Motor neuron (in vitro differentiated cells): ENCODE measurements at regions of chr2 and their contacts with region 1.

Region 1: GRCh38 chr2:159939946-159940345 is 122.5 kb downstream of the PLA2R1 start:
- ATAC-seq: peak in 3 of 8 experiments; percentile 23 to 60 (median 53)
- H3K4me3 ChIP-seq: no peak overlapping the region
- H3K27ac ChIP-seq: no peak overlapping the region
- H3K4me1 ChIP-seq: no peaks in the 10 kb centered on the region

Region 2: DNA sequence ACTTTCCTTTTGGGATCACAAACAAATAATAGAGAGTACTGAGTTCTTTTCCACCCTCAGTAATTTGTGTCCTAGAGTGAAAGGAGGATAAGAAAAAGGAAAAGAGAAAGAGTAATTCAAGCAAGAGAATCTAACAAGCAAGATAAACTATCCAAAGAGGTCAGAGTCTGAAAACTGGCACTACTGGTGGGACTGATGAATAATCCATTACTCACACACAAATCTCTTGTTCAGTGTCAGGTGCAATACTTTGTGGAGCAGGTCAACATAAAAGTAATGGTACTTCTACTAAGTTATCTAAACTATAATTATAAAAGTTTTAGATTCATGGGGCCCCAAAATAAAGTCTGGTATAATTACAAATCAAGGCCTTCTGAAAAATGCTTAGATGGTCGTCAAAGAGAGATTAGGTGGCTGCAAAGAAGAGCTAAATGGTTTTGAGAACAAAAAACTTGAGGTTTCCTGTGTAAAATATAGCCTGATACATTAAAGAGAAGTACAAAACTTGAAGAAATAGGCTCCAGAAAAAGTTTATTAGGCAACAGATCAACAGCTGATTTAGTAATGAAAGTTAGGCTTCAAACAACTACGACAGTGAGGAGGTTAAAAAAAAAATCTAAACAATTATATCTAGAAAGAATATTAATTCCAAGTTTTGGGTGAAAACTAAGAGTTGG is 433.0 kb before region 1 on chr2:
- in situ Hi-C with region 1: no loop called
- ATAC-seq: no peak
- H3K4me3 ChIP-seq: no peak overlapping the region
- H3K27ac ChIP-seq: no peak overlapping the region
- H3K4me1 ChIP-seq: peaks cover 0 to 2% of the 10 kb centered on the region in 2 donors

Region 3: GRCh38 chr2:159755788-159756187 is 184.2 kb before region 1 on chr2:
- in situ Hi-C with region 1: no loop called
- ATAC-seq: peak in 3 of 8 experiments; percentile 51 to 68 (median 62)
- H3K4me3 ChIP-seq: no peak overlapping the region
- H3K27ac ChIP-seq: no peak overlapping the region
- H3K4me1 ChIP-seq: no peaks in the 10 kb centered on the region

Region 4: GRCh38 chr2:159832858-159833257 is 107.1 kb before region 1 on chr2:
- in situ Hi-C with region 1: loop called in 1 of 9 experiments (anchors 25 kb)
- ATAC-seq: no peak
- H3K4me3 ChIP-seq: no peak overlapping the region
- H3K27ac ChIP-seq: no peak overlapping the region
- H3K4me1 ChIP-seq: no peaks in the 10 kb centered on the region